A549 (cell line): ENCODE measurements at regions of chr20 and their contacts with region 1.

Region 1: DNA sequence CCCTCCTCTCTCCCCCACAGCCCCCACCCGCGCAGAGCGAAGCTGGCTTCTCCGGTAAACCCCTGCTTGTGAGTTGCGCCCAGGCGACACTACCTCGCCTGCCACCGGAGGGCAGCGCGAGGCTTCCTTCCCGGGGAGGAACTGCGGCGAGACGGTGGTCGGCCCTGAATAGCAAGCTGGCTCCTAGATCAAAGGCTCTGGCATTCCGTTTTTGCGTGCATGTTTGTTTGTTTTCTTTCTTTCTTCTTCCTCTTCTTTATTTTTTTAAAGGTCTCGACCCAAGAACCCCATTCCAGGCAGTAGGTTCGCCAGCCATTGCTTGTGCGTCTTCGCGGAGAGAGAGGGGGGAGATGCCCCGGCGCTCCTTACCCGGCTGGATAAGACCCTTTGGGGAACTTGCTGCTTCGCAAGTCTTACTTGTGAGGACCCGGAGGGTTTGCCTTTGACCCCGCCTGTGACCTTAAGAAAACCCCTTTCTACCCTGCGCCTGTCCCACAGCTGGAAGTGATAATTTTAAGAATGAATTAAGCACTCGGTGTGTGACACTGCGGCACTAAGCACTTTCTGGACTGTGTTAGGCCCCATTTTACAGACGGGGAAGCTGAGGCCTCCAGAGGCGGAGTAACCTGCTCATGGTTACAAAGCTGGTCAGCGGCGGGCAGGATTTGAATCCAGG is 92.7 kb upstream of the SIRPA start:
- DNase-seq: peak; percentile 70 to 78
- ATAC-seq: peak; percentile 84 to 87
- H3K4me3 ChIP-seq: peak overlapping the region; percentile 28
- H3K27ac ChIP-seq: peak overlapping the region; percentile 47 to 62; a peak in 5 of 6 replicates
- H3K4me1 ChIP-seq: peaks cover 11% of the 10 kb centered on the region
- CTCF ChIP-seq: peak; percentile 81
- EP300 ChIP-seq: no peak
- POLR2A ChIP-seq: no peak
- RAD21 ChIP-seq: peak; percentile 84 to 95

Region 2: DNA sequence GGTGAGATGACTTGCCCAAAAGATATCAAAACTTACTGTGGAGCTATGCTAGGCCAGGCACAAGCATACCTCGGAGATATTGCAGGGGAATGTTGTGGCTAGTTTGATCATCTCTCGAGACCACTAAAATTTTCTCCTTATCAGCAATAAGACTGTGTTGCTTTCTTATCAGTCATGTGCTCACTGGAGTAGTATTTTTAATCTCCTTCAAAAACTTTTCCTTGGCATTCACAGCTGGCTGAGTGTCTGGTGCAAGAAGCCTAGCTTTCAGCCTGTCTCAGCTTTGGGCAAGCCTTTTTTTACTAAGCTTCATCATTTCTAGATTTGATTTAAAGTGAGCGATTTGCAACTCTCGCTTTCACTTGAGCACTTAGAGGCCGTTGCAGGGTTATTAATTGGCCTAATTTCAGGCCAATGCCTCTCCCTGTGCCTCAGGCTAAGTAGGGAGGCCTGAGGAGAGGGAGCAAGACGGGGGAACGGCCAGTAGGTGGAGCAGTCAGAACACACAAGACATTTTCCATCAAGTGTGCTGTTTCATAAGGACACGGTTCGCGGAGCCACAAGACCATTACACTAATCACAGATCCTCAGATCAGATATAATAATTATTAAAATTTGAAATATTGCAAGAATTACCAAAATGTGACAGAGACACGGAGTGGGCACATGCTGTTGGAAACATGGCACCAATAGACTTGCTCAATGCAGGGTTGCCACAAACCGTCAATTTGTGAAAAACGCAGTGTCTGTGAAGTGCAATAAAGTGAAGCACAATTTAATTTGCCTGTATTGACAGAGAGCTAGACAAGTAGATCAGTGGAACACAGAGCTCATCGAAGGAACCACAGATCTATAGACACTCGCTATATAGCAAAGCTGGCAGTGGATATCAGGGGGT is 38.1 kb before region 1 on chr20:
- CTCF ChIA-PET with region 1: interaction called, 31 read pairs
- POLR2A ChIA-PET with region 1: no interaction called
- DNase-seq: peak; percentile 80 to 85
- ATAC-seq: peak; percentile 95 to 98
- H3K4me3 ChIP-seq: no peak overlapping the region
- H3K27ac ChIP-seq: no peak overlapping the region
- H3K4me1 ChIP-seq: peaks cover 11% of the 10 kb centered on the region
- CTCF ChIP-seq: peak; percentile 88
- EP300 ChIP-seq: no peak
- POLR2A ChIP-seq: no peak
- RAD21 ChIP-seq: peak; percentile 87 to 91

Region 3: DNA sequence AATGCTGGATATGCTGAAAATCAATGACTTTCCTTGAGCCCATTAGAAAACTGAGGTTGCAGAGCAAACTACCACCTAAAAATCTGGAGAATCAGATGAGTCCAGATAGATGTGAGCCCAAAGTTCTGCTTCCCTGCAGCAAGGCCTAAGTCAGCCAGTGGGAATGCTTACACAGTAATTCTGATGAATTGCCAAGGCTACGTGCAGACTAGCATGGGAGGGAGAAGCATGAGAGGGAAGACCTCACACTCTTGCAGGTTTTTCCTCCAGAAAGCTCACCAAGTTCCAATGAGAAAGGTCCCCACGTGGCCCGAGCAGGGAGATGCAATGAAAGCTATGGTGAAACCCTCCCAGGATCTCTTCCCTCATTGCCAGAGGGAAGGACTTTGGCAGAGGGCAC is 12.1 kb before region 1 on chr20:
- CTCF ChIA-PET with region 1: interaction called, 19 read pairs
- POLR2A ChIA-PET with region 1: no interaction called
- DNase-seq: no peak
- ATAC-seq: peak in 1 of 2 experiments; percentile 14; a peak in 2 of 6 replicates
- H3K4me3 ChIP-seq: no peak overlapping the region
- H3K27ac ChIP-seq: no peak overlapping the region
- H3K4me1 ChIP-seq: no peaks in the 10 kb centered on the region
- CTCF ChIP-seq: no peak
- EP300 ChIP-seq: no peak
- POLR2A ChIP-seq: no peak
- RAD21 ChIP-seq: no peak

Region 4: DNA sequence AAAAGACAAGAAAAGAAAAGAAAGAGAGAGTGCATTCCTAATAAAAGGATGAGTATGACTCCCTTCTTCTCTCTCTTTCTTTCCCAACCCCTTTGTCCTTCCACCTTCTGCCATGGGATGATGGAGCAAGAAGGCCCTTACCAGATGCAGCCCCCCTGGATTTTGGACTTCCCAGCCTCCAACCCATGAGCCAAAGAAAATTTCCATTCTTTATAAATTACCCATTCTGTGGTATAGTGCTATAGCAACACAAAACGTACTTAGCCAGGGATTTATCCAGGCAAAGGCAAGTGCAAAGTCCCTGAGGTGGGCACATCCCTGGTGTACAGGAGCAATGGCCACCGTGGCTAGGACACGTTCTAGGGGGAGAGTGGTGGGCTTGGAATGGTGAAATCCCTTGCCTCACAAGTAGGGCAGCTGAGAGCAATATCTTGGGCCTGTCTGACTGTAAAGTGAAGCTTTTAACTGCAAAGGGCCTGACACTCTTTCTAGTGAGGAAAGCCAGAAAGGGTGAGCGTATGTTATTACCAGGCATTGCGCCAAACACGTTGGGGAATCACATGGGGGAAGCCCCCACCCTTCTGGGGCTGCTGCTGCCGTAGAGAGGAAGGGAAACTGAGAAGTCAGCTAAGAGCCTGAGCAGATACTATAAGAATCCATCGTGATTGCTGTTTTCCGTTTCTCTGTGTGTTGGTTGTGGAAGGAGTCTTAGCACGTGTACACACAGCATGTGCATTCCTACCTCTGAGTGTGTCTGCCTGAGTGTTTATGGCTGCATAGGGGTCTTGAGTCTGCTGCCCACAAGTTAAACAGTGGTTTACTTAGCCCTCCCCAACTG is 42.0 kb after region 1 on chr20:
- CTCF ChIA-PET with region 1: interaction called, 35 read pairs
- POLR2A ChIA-PET with region 1: no interaction called
- DNase-seq: no peak
- ATAC-seq: no peak; a peak in 1 of 6 replicates
- H3K4me3 ChIP-seq: no peak overlapping the region
- H3K27ac ChIP-seq: no peak overlapping the region
- H3K4me1 ChIP-seq: 0 out of 3 replicates have a peak, but pooled peaks cover 7% of the 10 kb centered on the region
- CTCF ChIP-seq: no peak
- EP300 ChIP-seq: no peak
- POLR2A ChIP-seq: no peak
- RAD21 ChIP-seq: no peak

Region 5: GRCh38 chr20:1879402-1879801 is 76.9 kb after region 1 on chr20:
- CTCF ChIA-PET with region 1: interaction called, 30 read pairs
- POLR2A ChIA-PET with region 1: no interaction called
- DNase-seq: no peak
- ATAC-seq: no peak
- H3K4me3 ChIP-seq: no peak overlapping the region
- H3K27ac ChIP-seq: no peak overlapping the region
- H3K4me1 ChIP-seq: peaks cover 11% of the 10 kb centered on the region
- CTCF ChIP-seq: no peak
- EP300 ChIP-seq: no peak
- POLR2A ChIP-seq: no peak
- RAD21 ChIP-seq: no peak

Region 6: DNA sequence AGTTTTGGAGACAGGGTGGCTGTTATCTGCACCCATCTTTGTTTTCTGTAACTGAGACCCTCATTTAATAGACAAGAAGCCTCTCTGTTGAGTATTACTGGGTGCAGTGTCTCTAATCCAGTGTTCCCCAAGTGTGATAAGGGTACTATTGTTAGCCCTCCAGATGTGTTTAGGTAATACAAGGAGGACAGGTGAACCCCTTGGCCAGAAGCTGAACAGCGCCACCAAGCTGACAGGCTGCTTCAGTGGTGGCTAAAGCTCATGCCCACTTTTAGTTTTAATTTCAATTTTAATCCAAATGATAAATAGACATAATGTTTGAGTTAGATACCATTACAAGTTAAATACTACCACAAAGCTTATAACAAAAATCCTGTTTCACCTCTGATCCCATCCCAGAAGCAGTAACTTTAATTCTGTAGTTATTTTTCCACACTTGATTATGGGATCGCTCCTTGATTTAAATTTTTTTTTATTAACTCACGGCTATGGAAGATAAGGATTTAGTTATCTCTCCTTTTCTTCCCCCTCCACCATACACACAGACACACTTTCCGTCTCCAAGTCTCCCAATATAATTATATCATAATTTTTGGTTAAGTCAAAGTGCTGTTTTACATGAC is 290.7 kb after region 1 on chr20:
- CTCF ChIA-PET with region 1: interaction called, 10 read pairs
- POLR2A ChIA-PET with region 1: no interaction called
- DNase-seq: peak; percentile 59 to 60
- ATAC-seq: peak; percentile 66 to 85; a peak in 4 of 6 replicates
- H3K4me3 ChIP-seq: no peak overlapping the region
- H3K27ac ChIP-seq: no peak overlapping the region
- H3K4me1 ChIP-seq: no peaks in the 10 kb centered on the region
- CTCF ChIP-seq: peak; percentile 68
- EP300 ChIP-seq: no peak
- POLR2A ChIP-seq: no peak
- RAD21 ChIP-seq: peak; percentile 66 to 80

Region 7: DNA sequence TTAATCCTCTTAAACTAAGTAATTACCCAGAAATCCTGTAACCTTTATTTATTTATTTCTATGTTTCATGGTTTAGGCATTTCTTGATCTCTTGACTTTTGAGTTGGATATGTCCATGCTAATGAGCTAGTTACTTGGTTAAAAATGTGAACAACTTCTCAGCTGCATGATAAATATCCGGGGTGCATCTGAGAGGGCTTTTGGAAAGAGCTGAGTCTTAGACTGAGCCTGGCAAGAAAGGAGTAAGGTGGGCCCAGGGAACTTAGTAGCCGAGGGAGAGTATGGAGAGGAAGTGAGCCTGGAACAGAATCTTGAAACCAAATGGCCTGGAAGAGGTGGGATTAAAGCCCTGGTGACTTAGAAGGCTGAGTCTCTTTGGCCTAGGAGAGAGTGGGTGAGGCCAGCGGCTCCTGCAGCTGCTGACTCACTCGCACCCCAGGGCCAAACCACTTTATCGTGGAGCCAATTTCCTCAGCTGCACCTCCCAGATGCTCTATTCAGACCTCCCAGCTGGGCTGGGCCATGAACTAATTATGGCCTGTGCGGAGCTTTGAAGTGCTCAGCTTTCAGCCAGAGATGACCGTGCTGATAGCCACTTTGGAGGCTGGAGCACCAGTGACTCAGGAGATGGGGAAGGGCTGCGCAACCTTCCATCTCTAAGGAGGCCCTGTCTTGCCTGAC is 512.4 kb after region 1 on chr20:
- CTCF ChIA-PET with region 1: no interaction called
- POLR2A ChIA-PET with region 1: no interaction called
- DNase-seq: peak in 1 of 2 experiments; percentile 35
- ATAC-seq: peak in 1 of 2 experiments; percentile 55; a peak in 3 of 6 replicates
- H3K4me3 ChIP-seq: no peak overlapping the region
- H3K27ac ChIP-seq: peak overlapping the region; percentile 41 to 53
- H3K4me1 ChIP-seq: peaks cover 10% of the 10 kb centered on the region; the same call in 2 of the 3 replicates
- CTCF ChIP-seq: no peak
- EP300 ChIP-seq: no peak
- POLR2A ChIP-seq: no peak
- RAD21 ChIP-seq: no peak